GM12878 (cell line): ENCODE measurements at regions of chr20 and their contacts with region 1.

Region 1: DNA sequence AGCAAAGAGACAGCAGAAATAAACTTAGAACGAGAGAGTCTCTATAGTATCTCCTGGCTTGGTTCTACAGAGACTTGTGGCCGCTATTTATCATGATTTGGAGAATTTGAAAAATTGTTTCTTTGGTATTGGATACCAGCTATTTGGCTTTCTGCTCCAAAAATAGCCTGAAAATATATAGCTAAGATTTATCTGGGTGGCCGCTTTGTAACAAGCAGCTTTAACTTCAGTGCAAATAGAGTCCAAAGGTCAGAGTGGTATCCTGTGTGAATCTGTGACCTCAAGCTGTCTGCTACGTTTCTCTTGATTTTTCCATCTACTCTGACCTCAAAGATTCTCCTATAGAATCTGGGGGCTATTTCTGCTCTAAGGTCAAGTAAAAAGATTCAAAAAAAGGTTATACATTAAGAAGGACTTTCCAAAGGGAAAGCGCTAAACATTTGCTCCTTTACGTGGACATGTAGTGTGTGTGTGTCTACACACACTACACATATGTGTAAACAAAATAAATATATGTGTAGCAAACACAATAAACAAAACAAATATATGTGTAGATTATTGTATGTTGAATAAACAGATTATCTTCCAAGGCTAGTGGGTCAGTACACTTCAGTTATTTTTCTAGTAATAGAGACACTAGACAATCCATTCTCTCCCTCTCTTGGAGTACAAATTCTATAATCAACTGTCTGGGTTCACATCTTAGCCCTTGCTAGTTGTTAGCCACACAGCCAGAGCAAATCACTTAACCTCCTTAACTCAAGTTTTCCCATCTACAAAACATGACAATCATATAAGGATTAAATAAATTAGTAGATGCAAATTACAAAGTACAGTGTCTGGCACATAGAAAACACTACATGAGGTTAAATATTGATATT is 40.8 kb downstream of the CHD6 start:
- DNase-seq: no peak
- ATAC-seq: peak; percentile 85
- H3K4me3 ChIP-seq: no peak overlapping the region
- H3K27ac ChIP-seq: no peak overlapping the region
- H3K4me1 ChIP-seq: no peaks in the 10 kb centered on the region
- H3K27me3 ChIP-seq: no peaks in the 10 kb centered on the region
- CTCF ChIP-seq: no peak
- EP300 ChIP-seq: peak in 1 of 2 experiments; percentile 40; a peak in 1 of 4 replicates
- POLR2A ChIP-seq: no peak
- RAD21 ChIP-seq: no peak

Region 2: DNA sequence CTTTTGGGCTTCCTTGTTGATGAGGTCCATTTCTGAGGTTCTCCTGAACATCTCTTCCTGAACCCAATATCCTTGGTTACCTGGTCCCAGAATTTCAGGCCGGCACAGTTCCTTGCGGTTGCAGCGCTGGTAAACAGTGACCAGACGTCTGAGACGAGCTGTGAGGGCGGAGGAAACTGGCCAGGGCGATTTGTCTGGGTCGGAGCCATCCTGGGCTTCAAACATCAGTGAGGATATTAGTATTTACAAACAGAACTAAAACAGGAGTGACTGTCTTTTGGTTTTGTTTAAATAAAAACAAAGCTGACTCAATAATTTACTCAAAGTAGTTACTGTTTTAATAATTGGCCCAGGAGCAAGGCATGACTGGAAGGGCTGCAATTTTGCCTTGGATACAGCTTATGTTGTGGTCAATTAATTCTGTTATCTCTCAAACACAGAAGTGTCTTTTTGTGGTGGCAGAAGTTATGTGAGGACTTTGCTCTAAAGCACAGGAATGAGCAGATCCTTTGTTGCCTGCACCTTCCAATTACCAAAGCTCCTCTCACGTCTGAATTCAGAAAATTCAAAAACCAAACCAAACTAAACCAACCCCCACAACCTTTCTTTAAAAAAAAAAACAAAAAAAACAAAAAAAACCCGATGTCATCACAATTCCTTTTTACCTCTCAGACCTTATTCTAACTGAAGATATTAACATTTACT is 152.0 kb before region 1 on chr20:
- CTCF ChIA-PET with region 1: no interaction called
- POLR2A ChIA-PET with region 1: no interaction called
- RAD21 ChIA-PET with region 1: no interaction called
- SMC1A ChIA-PET with region 1: no interaction called
- in situ Hi-C with region 1: no loop called
- intact Hi-C with region 1: no loop called
- DNase-seq: no peak
- ATAC-seq: no peak
- H3K4me3 ChIP-seq: no peak overlapping the region
- H3K27ac ChIP-seq: no peak overlapping the region
- H3K4me1 ChIP-seq: 0 out of 2 replicates have a peak, but pooled peaks cover 3% of the 10 kb centered on the region
- H3K27me3 ChIP-seq: no peaks in the 10 kb centered on the region
- CTCF ChIP-seq: no peak
- EP300 ChIP-seq: no peak
- POLR2A ChIP-seq: no peak
- RAD21 ChIP-seq: no peak

Region 3: DNA sequence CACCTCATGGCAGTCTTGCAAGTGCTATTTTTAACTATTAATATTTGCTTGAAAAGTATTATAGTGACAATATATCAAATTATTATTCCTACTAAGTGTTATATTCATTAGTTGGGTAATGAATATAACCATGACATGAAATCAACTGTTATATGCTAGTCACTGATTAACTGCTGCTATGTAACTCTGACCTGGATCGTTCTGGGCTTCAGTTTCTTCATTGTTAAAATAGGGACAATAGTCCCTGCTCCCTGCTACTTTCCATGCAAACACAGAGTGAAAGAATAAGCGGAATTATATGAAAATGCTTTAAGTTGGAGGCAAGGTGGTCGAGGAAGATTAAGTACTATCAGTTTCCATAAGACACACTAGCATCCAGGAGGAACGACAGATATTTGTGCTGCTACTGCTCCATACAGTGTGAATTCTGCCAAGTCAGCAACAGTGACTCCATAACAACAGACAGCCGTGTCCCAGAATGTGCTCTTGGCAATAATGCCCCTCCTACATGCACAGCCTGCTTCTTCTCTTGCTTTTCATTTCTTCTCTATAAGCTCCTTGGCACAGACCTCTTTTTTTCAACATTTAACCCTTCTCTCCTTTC is 66.4 kb before region 1 on chr20:
- CTCF ChIA-PET with region 1: no interaction called
- POLR2A ChIA-PET with region 1: no interaction called
- RAD21 ChIA-PET with region 1: no interaction called
- SMC1A ChIA-PET with region 1: no interaction called
- in situ Hi-C with region 1: no loop called
- intact Hi-C with region 1: no loop called
- DNase-seq: no peak
- ATAC-seq: no peak
- H3K4me3 ChIP-seq: no peak overlapping the region
- H3K27ac ChIP-seq: no peak overlapping the region
- H3K4me1 ChIP-seq: no peaks in the 10 kb centered on the region
- H3K27me3 ChIP-seq: no peaks in the 10 kb centered on the region
- CTCF ChIP-seq: no peak
- EP300 ChIP-seq: no peak
- POLR2A ChIP-seq: no peak
- RAD21 ChIP-seq: no peak

Region 4: GRCh38 chr20:41553142-41553880 is 24.1 kb before region 1 on chr20:
- CTCF ChIA-PET with region 1: no interaction called
- POLR2A ChIA-PET with region 1: interaction called, 3 read pairs
- RAD21 ChIA-PET with region 1: interaction called, 6 read pairs
- SMC1A ChIA-PET with region 1: interaction called, 12 read pairs
- in situ Hi-C with region 1: no loop called
- intact Hi-C with region 1: no loop called
- DNase-seq: no peak
- ATAC-seq: peak; percentile 84
- H3K4me3 ChIP-seq: no peak overlapping the region
- H3K27ac ChIP-seq: peak overlapping the region; percentile 41
- H3K4me1 ChIP-seq: 0 out of 2 replicates have a peak, but pooled peaks cover 4% of the 10 kb centered on the region
- H3K27me3 ChIP-seq: no peaks in the 10 kb centered on the region
- CTCF ChIP-seq: no peak
- EP300 ChIP-seq: no peak
- POLR2A ChIP-seq: no peak
- RAD21 ChIP-seq: no peak

Region 5: DNA sequence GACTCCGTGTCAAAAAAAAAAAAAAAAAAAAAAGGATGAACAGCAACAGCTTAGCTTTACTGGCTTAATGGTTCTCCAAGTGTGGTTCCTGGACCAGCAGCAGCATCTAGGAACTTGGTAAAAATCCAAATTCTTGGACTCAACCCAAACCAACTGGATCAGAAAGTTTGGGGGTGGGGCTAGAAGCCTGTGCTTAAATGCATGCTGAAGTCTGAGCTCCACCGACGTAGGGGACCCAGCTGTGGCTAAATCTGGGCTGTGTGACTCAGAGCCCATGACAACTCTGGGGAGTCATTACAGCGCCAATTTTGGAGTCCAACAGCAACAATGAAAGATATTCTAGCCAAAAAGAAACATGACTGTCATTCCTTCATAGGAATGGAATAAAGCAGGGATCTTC is 54.5 kb after region 1 on chr20:
- CTCF ChIA-PET with region 1: no interaction called
- POLR2A ChIA-PET with region 1: no interaction called
- RAD21 ChIA-PET with region 1: no interaction called
- SMC1A ChIA-PET with region 1: no interaction called
- in situ Hi-C with region 1: no loop called
- intact Hi-C with region 1: no loop called
- DNase-seq: no peak
- ATAC-seq: no peak
- H3K4me3 ChIP-seq: no peak overlapping the region
- H3K27ac ChIP-seq: no peak overlapping the region
- H3K4me1 ChIP-seq: no peaks in the 10 kb centered on the region
- H3K27me3 ChIP-seq: no peaks in the 10 kb centered on the region
- CTCF ChIP-seq: no peak
- EP300 ChIP-seq: no peak
- POLR2A ChIP-seq: no peak
- RAD21 ChIP-seq: no peak

Region 6: GRCh38 chr20:41672282-41672681 is 94.9 kb after region 1 on chr20:
- CTCF ChIA-PET with region 1: no interaction called
- POLR2A ChIA-PET with region 1: no interaction called
- RAD21 ChIA-PET with region 1: no interaction called
- SMC1A ChIA-PET with region 1: no interaction called
- in situ Hi-C with region 1: no loop called
- intact Hi-C with region 1: no loop called
- DNase-seq: no peak
- ATAC-seq: no peak
- H3K4me3 ChIP-seq: no peak overlapping the region
- H3K27ac ChIP-seq: no peak overlapping the region
- H3K4me1 ChIP-seq: peaks cover 4% of the 10 kb centered on the region
- H3K27me3 ChIP-seq: no peaks in the 10 kb centered on the region; a peak in 1 of 4 replicates
- CTCF ChIP-seq: no peak
- EP300 ChIP-seq: no peak
- POLR2A ChIP-seq: no peak
- RAD21 ChIP-seq: no peak